CD4-positive, alpha-beta T cell (primary cell): ENCODE measurements at regions of chr10 and their contacts with region 1.

Region 1: DNA sequence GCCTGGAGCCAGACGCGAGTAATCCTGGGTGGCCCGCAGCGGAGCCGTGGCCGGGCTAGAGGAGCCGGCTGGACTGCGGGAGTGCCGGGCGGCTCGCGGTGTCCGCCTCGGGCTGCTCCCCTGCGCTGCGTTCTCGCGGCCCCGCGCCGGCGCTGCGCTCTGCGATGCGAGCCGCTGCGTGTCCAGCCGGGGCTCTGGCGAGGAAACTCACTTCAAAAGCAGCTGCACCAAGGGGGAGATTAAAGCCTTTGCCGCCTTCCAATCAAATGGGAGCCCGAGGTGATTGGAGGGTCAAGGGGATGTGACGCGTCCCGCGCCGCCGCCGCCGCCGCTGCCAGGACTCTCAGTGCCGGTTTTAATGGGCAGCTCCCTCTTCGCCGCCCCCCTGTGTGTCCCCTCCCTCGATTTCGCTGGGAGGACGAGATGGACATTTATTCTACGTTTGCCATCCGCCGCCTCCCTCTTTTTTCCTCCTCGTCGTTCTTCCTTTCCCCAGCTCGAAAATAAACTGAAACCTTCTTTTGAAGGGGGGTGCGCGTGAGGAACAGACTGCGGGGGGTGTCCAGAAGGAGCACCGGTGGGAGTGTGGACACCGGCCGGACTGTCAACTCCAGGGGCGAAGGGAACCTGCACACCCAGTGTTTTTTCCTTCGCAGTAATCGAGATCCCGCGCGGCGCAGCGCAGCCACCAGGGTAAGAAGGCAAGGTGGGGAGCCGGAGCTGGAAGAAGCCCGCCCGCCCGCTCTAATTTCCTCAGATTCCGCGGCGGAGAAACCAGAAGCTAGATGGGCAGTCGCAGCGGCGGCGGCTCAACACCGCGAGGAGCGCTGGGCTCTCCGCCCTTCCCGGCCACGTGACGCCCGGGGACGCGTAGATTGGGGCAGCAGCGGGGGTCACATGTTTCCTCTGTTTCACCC is at the start of gene ZNF503:
- DNase-seq: peak in 4 of 14 experiments; percentile 22 to 63 (median 49)
- ATAC-seq: peak; percentile 46
- H3K4me3 ChIP-seq: peak within 1 kb of the TSS; percentile 62
- H3K4me3 Mint-ChIP-seq: peak within 1 kb of the TSS; percentile 80
- H3K27ac ChIP-seq: no peak within 1 kb of the TSS
- H3K27ac Mint-ChIP-seq: no peak within 1 kb of the TSS
- H3K4me1 ChIP-seq: peaks cover 45% of the 10 kb centered on the region
- H3K4me1 Mint-ChIP-seq: peaks cover 32% of the 10 kb centered on the region
- H3K27me3 ChIP-seq: peaks cover 65 to 90% of the 10 kb centered on the region in 2 experiments
- H3K27me3 Mint-ChIP-seq: peaks cover 66% of the 10 kb centered on the region
- CTCF ChIP-seq: no peak
- total RNA-seq, gene ZNF503: 0.38 to 0.47 TPM

Region 2: GRCh38 chr10:74628136-74628535 is 773.7 kb before region 1 on chr10:
- CTCF ChIA-PET with region 1: no interaction called
- POLR2A ChIA-PET with region 1: no interaction called
- intact Hi-C with region 1: no loop called
- DNase-seq: no peak
- ATAC-seq: no peak
- H3K4me3 ChIP-seq: no peak overlapping the region
- H3K4me3 Mint-ChIP-seq: no peak overlapping the region
- H3K27ac ChIP-seq: no peak overlapping the region
- H3K27ac Mint-ChIP-seq: no peak overlapping the region
- H3K4me1 ChIP-seq: no peaks in the 10 kb centered on the region
- H3K4me1 Mint-ChIP-seq: no peaks in the 10 kb centered on the region
- H3K27me3 ChIP-seq: no peaks in the 10 kb centered on the region
- H3K27me3 Mint-ChIP-seq: no peaks in the 10 kb centered on the region
- CTCF ChIP-seq: no peak

Region 3: DNA sequence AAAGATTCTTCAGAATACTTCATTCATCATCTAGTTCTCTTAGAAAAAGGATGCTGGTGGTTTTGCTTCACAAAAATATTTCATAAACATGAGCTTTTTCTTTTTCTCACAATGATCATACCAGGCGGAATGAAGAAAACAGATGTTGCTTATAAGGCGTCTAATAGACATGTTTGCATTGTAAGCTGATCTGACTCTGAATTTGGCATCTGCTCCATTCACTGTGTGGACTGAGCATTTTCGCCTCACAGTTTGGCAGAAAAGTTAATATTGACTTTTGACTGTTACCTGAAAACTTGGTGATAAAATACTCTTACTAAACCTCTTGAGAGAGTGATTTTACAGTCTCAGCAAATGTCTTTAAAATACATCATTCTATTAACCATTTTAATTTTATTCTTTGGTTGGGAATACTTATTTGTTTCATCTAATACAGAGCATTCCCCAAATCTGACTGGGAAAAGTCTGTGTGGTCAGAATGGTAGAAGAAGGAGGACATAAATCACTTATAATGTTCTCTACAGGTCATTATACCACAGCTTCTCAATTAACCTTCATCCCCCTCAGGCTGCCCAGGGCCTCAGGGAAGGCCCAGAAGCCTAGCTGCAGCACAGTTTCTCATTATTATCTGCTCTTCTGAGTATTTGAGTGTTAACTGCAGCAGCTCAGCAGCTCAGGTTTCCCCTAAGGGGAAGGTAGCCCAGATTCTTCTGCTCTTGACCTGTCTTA is 697.0 kb before region 1 on chr10:
- CTCF ChIA-PET with region 1: no interaction called
- POLR2A ChIA-PET with region 1: no interaction called
- intact Hi-C with region 1: no loop called
- DNase-seq: no peak
- ATAC-seq: no peak
- H3K4me3 ChIP-seq: no peak overlapping the region
- H3K4me3 Mint-ChIP-seq: no peak overlapping the region
- H3K27ac ChIP-seq: no peak overlapping the region
- H3K27ac Mint-ChIP-seq: no peak overlapping the region
- H3K4me1 ChIP-seq: no peaks in the 10 kb centered on the region
- H3K4me1 Mint-ChIP-seq: no peaks in the 10 kb centered on the region
- H3K27me3 ChIP-seq: no peaks in the 10 kb centered on the region
- H3K27me3 Mint-ChIP-seq: no peaks in the 10 kb centered on the region
- CTCF ChIP-seq: no peak

Region 4: DNA sequence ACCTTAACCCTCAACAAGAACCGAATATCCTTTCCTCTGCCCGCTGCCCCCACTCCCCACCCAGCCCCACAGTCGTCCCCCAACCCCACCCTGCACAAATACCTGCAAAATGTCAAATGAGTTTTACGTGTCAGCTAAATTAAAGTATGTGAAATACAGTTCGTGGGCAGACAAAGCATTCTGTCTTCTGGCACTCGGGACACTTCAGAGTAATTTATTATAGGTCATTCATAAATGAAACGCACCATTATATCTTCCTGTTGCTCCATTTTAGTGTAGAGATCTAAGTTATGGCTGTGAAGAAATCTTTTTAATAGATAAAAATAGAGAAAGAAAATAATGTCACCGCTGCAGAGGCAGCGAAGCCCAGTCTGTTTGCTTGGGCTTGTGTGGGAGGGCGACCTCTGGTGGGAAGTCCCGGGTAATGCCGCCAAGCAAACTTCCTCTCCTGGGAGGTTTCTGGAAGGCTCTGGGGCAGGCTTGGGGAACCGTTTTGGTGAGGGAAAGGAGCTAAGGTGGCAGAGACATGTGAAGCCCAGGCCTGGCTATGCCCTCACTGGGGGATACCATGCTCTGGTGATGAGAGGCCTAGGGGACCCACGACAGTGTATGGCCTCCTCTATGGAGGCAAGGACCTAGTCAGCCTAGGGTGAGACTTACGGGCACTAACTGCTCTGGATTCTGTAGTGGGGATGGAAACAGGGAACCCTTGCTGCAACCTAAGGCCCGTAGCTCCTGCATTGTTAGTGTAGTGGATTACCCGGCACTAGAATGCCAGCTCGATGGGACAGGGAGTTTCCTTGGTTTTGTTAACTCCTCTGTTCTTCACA is 634.5 kb after region 1 on chr10:
- CTCF ChIA-PET with region 1: no interaction called
- POLR2A ChIA-PET with region 1: no interaction called
- intact Hi-C with region 1: loop called in 1 of 2 experiments (anchors 5 kb)
- DNase-seq: peak in 11 of 14 experiments; percentile 4 to 54 (median 17)
- ATAC-seq: no peak
- H3K4me3 ChIP-seq: no peak overlapping the region
- H3K4me3 Mint-ChIP-seq: no peak overlapping the region
- H3K27ac ChIP-seq: no peak overlapping the region
- H3K27ac Mint-ChIP-seq: no peak overlapping the region
- H3K4me1 ChIP-seq: no peaks in the 10 kb centered on the region
- H3K4me1 Mint-ChIP-seq: peaks cover 4% of the 10 kb centered on the region
- H3K27me3 ChIP-seq: peaks cover 0 to 2% of the 10 kb centered on the region in 2 experiments
- H3K27me3 Mint-ChIP-seq: peaks cover 9% of the 10 kb centered on the region
- CTCF ChIP-seq: peak; percentile 53

Region 5: GRCh38 chr10:76086761-76087639 is 685.2 kb after region 1 on chr10:
- CTCF ChIA-PET with region 1: no interaction called
- POLR2A ChIA-PET with region 1: no interaction called
- intact Hi-C with region 1: loop called in 1 of 2 experiments (anchors 5 kb)
- DNase-seq: peak in 1 of 14 experiments; percentile 6
- ATAC-seq: no peak
- H3K4me3 ChIP-seq: no peak overlapping the region
- H3K4me3 Mint-ChIP-seq: no peak overlapping the region
- H3K27ac ChIP-seq: no peak overlapping the region
- H3K27ac Mint-ChIP-seq: no peak overlapping the region
- H3K4me1 ChIP-seq: no peaks in the 10 kb centered on the region
- H3K4me1 Mint-ChIP-seq: no peaks in the 10 kb centered on the region
- H3K27me3 ChIP-seq: no peaks in the 10 kb centered on the region
- H3K27me3 Mint-ChIP-seq: no peaks in the 10 kb centered on the region
- CTCF ChIP-seq: no peak

Region 6: GRCh38 chr10:76303682-76304316 is 902.0 kb after region 1 on chr10:
- CTCF ChIA-PET with region 1: no interaction called
- POLR2A ChIA-PET with region 1: no interaction called
- intact Hi-C with region 1: loop called in 1 of 2 experiments (anchors 5 kb)
- DNase-seq: peak in 7 of 14 experiments; percentile 7 to 34 (median 20)
- ATAC-seq: peak; percentile 56
- H3K4me3 ChIP-seq: no peak overlapping the region
- H3K4me3 Mint-ChIP-seq: no peak overlapping the region
- H3K27ac ChIP-seq: no peak overlapping the region
- H3K27ac Mint-ChIP-seq: no peak overlapping the region
- H3K4me1 ChIP-seq: no peaks in the 10 kb centered on the region
- H3K4me1 Mint-ChIP-seq: peaks cover 6% of the 10 kb centered on the region
- H3K27me3 ChIP-seq: no peaks in the 10 kb centered on the region
- H3K27me3 Mint-ChIP-seq: peaks cover 14% of the 10 kb centered on the region
- CTCF ChIP-seq: no peak

Region 7: GRCh38 chr10:76984559-76985443 is 1583.0 kb after region 1 on chr10:
- CTCF ChIA-PET with region 1: no interaction called
- POLR2A ChIA-PET with region 1: no interaction called
- intact Hi-C with region 1: loop called (anchors 5 to 10 kb)
- DNase-seq: peak; percentile 35 to 73 (median 48)
- ATAC-seq: no peak
- H3K4me3 ChIP-seq: no peak overlapping the region
- H3K4me3 Mint-ChIP-seq: no peak overlapping the region
- H3K27ac ChIP-seq: no peak overlapping the region
- H3K27ac Mint-ChIP-seq: no peak overlapping the region
- H3K4me1 ChIP-seq: no peaks in the 10 kb centered on the region
- H3K4me1 Mint-ChIP-seq: no peaks in the 10 kb centered on the region
- H3K27me3 ChIP-seq: no peaks in the 10 kb centered on the region
- H3K27me3 Mint-ChIP-seq: no peaks in the 10 kb centered on the region
- CTCF ChIP-seq: peak; percentile 93

Region 8: DNA sequence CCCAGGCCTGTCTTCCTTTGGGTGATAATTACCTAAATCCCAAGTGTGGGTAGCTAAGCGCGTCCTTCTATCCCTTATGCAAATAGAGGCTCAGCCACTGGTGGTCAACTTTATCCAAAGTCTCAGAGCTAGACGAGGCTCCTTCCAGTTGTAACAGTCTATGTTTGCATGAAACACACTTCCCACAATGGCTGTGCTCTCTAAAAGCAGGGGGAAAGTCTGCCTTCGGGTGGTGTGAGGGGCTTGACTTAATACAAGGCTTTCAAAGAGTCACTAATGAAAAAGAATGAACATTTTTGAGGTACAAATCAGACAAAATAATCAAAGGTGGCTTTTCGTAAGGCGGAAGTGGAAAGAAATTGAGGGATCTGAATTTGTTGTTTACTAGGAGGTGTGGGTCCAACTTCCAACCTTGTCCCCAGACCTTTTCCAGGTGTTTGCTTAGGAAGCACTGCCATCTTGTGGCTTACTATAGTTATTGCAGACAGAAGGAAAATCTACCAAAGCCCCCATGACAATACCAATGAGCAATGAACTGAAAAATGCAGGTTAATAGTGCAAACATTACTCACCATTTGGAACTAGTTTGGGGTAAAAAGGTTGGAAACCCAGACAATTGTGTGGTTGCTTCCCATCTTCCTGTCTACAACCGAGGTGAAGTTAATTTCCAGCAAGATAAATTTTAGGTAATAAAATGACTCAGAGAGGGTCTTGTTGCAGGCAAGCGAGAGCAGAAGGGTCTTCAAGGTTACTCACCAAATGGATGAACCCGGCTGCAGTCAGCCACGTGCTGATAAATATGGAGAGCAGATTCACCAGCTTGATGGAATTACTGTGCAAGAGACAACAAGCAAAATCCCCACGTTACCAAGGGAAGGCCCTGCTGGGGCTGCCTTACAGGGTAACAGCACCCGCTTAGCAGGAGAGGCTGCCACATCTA is 1710.1 kb after region 1 on chr10:
- CTCF ChIA-PET with region 1: no interaction called
- POLR2A ChIA-PET with region 1: no interaction called
- intact Hi-C with region 1: loop called (anchors 5 to 10 kb)
- DNase-seq: peak in 3 of 14 experiments; percentile 6 to 52 (median 39)
- ATAC-seq: no peak
- H3K4me3 ChIP-seq: no peak overlapping the region
- H3K4me3 Mint-ChIP-seq: no peak overlapping the region
- H3K27ac ChIP-seq: no peak overlapping the region
- H3K27ac Mint-ChIP-seq: no peak overlapping the region
- H3K4me1 ChIP-seq: no peaks in the 10 kb centered on the region
- H3K4me1 Mint-ChIP-seq: no peaks in the 10 kb centered on the region
- H3K27me3 ChIP-seq: no peaks in the 10 kb centered on the region
- H3K27me3 Mint-ChIP-seq: no peaks in the 10 kb centered on the region
- CTCF ChIP-seq: peak; percentile 86